ENCODE measurements at regions of chr7 and their contacts with region 1.

Region 1: DNA sequence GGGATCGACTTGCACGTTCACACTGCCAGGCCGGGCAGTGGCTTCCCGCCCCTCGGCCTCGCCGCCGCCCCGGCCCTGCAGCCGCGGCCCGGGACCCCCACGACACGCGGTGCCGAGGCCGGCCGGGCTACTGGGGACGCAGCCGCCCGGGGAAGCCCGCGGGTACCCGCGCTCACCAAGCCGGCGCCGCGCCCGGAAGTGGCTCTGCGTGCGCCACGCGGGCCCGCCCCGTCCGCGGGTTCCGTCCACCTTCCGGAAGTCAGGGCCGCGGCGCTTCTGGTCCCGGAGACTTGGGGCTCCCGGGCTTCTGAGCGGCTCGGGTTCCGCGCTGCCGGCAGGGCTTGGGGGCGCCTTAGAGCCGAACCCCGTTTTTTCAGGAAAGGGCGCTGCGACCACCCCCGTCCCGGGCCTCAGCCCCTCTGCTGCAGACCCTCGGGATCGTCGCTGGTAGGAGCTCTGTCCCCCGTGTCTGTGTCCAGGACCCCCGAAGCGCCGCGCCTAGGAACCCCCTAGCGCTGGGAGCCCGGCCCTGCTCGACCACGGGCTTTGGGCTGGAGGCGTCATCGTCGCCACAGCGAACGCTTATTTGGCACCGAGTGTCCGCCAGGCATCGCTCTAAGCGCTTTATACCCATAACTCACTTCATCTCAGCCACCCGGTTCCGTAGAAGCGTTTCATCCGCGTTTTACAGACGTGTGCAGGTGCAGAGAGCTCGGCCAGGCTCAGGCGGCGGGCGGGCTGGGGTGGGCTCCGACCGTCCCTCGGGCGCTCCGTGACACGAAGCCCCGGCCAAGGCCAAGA is at the start of gene PSMG3:
- DNase-seq: peak; percentile 75 to 94 (median 86)
- ATAC-seq: peak; percentile 88
- H3K4me3 ChIP-seq: peak within 1 kb of the TSS; percentile 98
- H3K4me3 Mint-ChIP-seq: peak within 1 kb of the TSS; percentile 91
- H3K27ac ChIP-seq: peak within 1 kb of the TSS; percentile 82 to 83
- H3K27ac Mint-ChIP-seq: peak within 1 kb of the TSS; percentile 92
- H3K4me1 ChIP-seq: peaks cover 35% of the 10 kb centered on the region
- H3K4me1 Mint-ChIP-seq: peaks cover 23% of the 10 kb centered on the region
- H3K27me3 ChIP-seq: no peaks in the 10 kb centered on the region
- H3K27me3 Mint-ChIP-seq: no peaks in the 10 kb centered on the region
- CTCF ChIP-seq: peak; percentile 27
- total RNA-seq, gene PSMG3: 13.3 to 13.8 TPM

Region 2: GRCh38 chr7:179209-179681 is 1390.8 kb before region 1 on chr7:
- CTCF ChIA-PET with region 1: no interaction called
- POLR2A ChIA-PET with region 1: no interaction called
- intact Hi-C with region 1: no loop called
- DNase-seq: no peak
- ATAC-seq: no peak
- H3K4me3 ChIP-seq: no peak overlapping the region
- H3K4me3 Mint-ChIP-seq: no peak overlapping the region
- H3K27ac ChIP-seq: no peak overlapping the region
- H3K27ac Mint-ChIP-seq: no peak overlapping the region
- H3K4me1 ChIP-seq: no peaks in the 10 kb centered on the region
- H3K4me1 Mint-ChIP-seq: no peaks in the 10 kb centered on the region
- H3K27me3 ChIP-seq: no peaks in the 10 kb centered on the region
- H3K27me3 Mint-ChIP-seq: no peaks in the 10 kb centered on the region
- CTCF ChIP-seq: no peak

Region 3: DNA sequence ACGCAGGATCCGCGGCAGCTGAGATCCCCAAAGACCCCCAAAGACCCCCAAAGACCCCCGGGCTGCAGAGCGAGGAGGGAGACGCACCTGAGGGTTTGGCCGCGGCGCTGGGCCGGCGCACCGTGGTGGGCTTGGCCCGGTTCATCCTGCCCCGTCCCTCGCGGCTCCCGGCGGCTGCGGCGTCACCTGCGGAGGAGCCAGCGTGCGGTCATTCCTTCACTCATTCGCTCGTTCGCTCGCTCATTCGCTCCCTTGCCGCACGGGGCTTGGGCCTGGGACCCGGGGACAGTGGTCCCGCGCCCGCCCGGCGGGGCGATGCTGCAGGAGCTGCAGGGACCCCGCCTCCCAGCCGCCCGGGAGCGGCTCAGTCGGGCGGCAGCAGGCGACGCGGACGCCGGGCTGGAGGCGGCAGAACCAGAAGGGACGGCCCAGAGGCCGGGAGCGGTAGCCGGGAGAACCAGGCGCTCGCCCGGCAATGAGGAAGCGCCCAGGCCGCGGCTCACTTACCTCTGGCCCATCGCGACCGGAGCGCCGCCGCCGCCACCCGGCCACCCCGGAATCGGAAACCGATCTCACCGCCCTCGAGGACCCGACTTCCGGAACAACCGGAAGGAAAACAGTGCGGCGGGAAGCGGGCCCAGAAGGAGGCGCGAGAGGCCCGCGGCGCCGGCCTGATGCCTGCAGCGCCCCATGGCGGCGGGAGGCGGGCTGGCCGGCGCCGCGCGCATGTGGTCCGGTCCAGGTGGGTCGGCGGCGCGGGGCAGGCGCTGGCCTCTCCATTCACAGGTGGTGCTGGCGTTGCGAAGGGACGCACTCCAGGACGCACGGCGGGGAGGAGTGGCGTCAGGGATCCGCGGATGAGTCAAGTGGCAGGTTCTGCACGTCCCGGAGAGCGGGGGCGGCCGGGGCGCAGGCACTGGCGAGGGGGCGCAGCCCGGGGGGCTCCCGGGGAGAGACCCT is 65.9 kb before region 1 on chr7 and contains the start of gene INTS1:
- CTCF ChIA-PET with region 1: interaction called, 3 read pairs
- POLR2A ChIA-PET with region 1: interaction called, 3 read pairs
- intact Hi-C with region 1: loop called in 1 of 2 experiments (anchors 1 kb)
- DNase-seq: peak; percentile 82 to 94 (median 87)
- ATAC-seq: peak; percentile 83
- H3K4me3 ChIP-seq: peak within 1 kb of the TSS; percentile 74
- H3K4me3 Mint-ChIP-seq: peak within 1 kb of the TSS; percentile 90
- H3K27ac ChIP-seq: peak within 1 kb of the TSS in 1 of 2 donors; percentile 29
- H3K27ac Mint-ChIP-seq: peak within 1 kb of the TSS; percentile 71
- H3K4me1 ChIP-seq: peaks cover 60% of the 10 kb centered on the region
- H3K4me1 Mint-ChIP-seq: peaks cover 31% of the 10 kb centered on the region
- H3K27me3 ChIP-seq: no peaks in the 10 kb centered on the region
- H3K27me3 Mint-ChIP-seq: peaks cover 4% of the 10 kb centered on the region
- CTCF ChIP-seq: peak; percentile 87
- total RNA-seq, gene INTS1: 91.0 to 91.5 TPM

Region 4: GRCh38 chr7:1532483-1533424 is 37.3 kb before region 1 on chr7:
- CTCF ChIA-PET with region 1: no interaction called
- POLR2A ChIA-PET with region 1: interaction called, 3 read pairs
- intact Hi-C with region 1: loop called (anchors 1 to 5 kb)
- DNase-seq: peak; percentile 42 to 81 (median 59)
- ATAC-seq: peak; percentile 51
- H3K4me3 ChIP-seq: peak overlapping the region; percentile 75
- H3K4me3 Mint-ChIP-seq: peak overlapping the region; percentile 95
- H3K27ac ChIP-seq: peak overlapping the region; percentile 88 to 95
- H3K27ac Mint-ChIP-seq: peak overlapping the region; percentile 100
- H3K4me1 ChIP-seq: peaks cover 46% of the 10 kb centered on the region
- H3K4me1 Mint-ChIP-seq: peaks cover 32% of the 10 kb centered on the region
- H3K27me3 ChIP-seq: no peaks in the 10 kb centered on the region
- H3K27me3 Mint-ChIP-seq: peaks cover 4% of the 10 kb centered on the region
- CTCF ChIP-seq: no peak

Region 5: DNA sequence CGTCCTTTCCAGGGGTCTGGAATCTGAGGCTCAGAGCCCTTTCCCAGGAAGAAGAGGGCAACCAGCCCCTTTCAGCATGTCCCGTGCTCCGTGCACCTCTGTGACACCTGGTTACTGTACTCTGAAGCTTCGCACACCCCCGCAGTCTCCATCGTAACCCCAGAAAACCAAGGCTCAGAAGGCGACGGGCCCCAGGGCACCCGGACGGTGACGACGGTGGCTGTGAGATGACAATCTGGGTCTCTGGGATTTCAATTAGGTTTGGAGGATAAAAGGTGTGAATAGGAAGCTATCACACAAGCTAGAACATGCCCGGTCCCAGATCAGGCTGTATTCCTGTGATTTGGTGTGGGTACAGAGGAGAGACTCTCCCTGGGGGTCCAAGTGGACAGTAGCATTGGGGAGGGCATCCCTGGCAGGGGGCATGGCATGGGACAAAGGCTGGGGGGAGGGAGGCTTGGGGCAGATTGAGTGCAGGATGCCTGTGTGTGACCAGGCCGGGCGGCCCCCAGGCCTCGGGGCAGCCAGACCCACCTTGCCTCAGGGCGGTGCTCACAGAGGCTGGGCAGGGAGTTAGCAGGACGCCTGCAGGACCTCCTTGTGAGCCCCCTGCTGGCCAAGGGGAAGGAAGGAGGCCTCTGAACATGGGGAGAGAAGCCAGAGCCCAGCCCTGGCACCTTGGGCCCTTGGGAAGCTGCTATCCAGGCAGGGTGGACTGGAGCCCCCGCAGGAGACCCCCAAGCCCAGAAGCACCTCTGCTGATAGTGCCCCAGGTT is 23.2 kb after region 1 on chr7:
- CTCF ChIA-PET with region 1: no interaction called
- POLR2A ChIA-PET with region 1: no interaction called
- intact Hi-C with region 1: loop called in 1 of 2 experiments (anchors 1 kb)
- DNase-seq: peak in 2 of 14 experiments; percentile 13 to 21
- ATAC-seq: no peak
- H3K4me3 ChIP-seq: no peak overlapping the region
- H3K4me3 Mint-ChIP-seq: peak overlapping the region; percentile 30
- H3K27ac ChIP-seq: no peak overlapping the region
- H3K27ac Mint-ChIP-seq: no peak overlapping the region
- H3K4me1 ChIP-seq: peaks cover 24% of the 10 kb centered on the region
- H3K4me1 Mint-ChIP-seq: peaks cover 19% of the 10 kb centered on the region
- H3K27me3 ChIP-seq: peaks cover 19 to 32% of the 10 kb centered on the region in 2 experiments
- H3K27me3 Mint-ChIP-seq: peaks cover 41% of the 10 kb centered on the region
- CTCF ChIP-seq: no peak

Region 6: GRCh38 chr7:2403014-2403717 is 833.1 kb after region 1 on chr7 and contains the start of gene CHST12:
- CTCF ChIA-PET with region 1: no interaction called
- POLR2A ChIA-PET with region 1: interaction called, 3 read pairs
- intact Hi-C with region 1: loop called in 1 of 2 experiments (anchors 5 kb)
- DNase-seq: peak; percentile 90 to 99 (median 93)
- ATAC-seq: peak; percentile 76
- H3K4me3 ChIP-seq: peak within 1 kb of the TSS; percentile 76
- H3K4me3 Mint-ChIP-seq: peak within 1 kb of the TSS; percentile 88
- H3K27ac ChIP-seq: peak within 1 kb of the TSS; percentile 35 to 38
- H3K27ac Mint-ChIP-seq: peak within 1 kb of the TSS; percentile 82
- H3K4me1 ChIP-seq: peaks cover 57% of the 10 kb centered on the region
- H3K4me1 Mint-ChIP-seq: peaks cover 54% of the 10 kb centered on the region
- H3K27me3 ChIP-seq: no peaks in the 10 kb centered on the region
- H3K27me3 Mint-ChIP-seq: no peaks in the 10 kb centered on the region
- CTCF ChIP-seq: no peak
- total RNA-seq, gene CHST12: 6.6 to 8.6 TPM

Region 7: GRCh38 chr7:2844165-2844898 is 1274.3 kb after region 1 on chr7 and contains the start of gene GNA12:
- CTCF ChIA-PET with region 1: no interaction called
- POLR2A ChIA-PET with region 1: no interaction called
- intact Hi-C with region 1: loop called in 1 of 2 experiments (anchors 5 kb)
- DNase-seq: peak; percentile 94 to 99 (median 98)
- ATAC-seq: peak; percentile 94
- H3K4me3 ChIP-seq: peak within 1 kb of the TSS; percentile 67
- H3K4me3 Mint-ChIP-seq: peak within 1 kb of the TSS; percentile 93
- H3K27ac ChIP-seq: peak within 1 kb of the TSS in 1 of 2 donors; percentile 5
- H3K27ac Mint-ChIP-seq: peak within 1 kb of the TSS; percentile 76
- H3K4me1 ChIP-seq: peaks cover 20% of the 10 kb centered on the region
- H3K4me1 Mint-ChIP-seq: peaks cover 49% of the 10 kb centered on the region
- H3K27me3 ChIP-seq: no peaks in the 10 kb centered on the region
- H3K27me3 Mint-ChIP-seq: no peaks in the 10 kb centered on the region
- CTCF ChIP-seq: no peak
- total RNA-seq, gene GNA12: 16.0 to 16.1 TPM